ENCODE measurements at regions of chr18 and their contacts with region 1.

Region 1: GRCh38 chr18:25230658-25231326 is 121.2 kb downstream of the ZNF521 start:
- DNase-seq: peak; percentile 80
- H3K4me3 ChIP-seq: peak overlapping the region; percentile 35
- H3K27ac ChIP-seq: peak overlapping the region; percentile 81
- H3K27me3 ChIP-seq: no peaks in the 10 kb centered on the region
- CTCF ChIP-seq: no peak

Region 2: DNA sequence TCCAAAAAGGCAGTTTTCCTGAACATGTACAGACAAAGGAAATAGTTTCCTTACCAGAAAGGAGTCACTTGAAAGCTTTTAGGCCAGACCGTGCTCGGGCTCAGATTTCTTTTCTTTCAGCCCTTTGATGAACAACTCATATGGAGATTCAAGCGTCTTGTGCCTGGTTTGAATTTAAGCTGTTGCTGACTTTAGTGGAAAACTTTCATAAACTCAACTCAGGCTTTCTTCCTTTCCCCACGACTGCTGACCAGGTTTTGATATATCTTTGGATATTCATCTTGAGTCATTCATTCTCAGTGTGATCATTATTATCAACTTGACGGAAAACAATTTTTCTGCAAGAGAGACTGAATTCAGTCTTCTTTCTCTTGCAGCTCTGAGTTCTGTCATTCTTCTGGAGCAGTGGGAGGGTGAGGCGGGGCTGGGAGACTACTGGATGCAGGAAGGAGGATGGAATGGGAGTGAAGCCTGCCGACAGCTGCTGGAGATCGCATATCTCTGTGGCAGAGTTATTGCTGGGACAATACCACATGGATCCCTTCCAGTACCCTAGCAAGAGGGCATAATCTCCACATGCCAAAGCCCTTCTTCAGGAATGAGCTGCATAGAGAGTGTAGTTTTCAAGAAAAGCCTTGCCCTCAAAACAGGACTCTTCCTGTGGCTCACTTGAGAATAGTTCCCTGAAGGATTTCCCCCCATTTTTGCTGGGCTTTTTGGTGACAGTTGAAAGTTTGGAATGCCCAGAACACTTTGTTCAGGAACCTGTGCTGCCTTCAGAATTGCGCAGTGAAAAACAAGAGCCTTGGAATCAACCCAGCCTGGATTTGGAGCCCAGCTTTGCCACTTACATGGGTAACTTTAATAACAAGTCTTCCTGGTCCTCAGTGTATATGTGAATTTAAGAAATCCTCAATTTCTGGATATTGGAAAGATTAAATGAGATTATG is 243.2 kb before region 1 on chr18:
- CTCF ChIA-PET with region 1: no interaction called
- POLR2A ChIA-PET with region 1: interaction called, 13 read pairs
- DNase-seq: no peak
- H3K4me3 ChIP-seq: no peak overlapping the region
- H3K27ac ChIP-seq: no peak overlapping the region
- H3K27me3 ChIP-seq: no peaks in the 10 kb centered on the region
- CTCF ChIP-seq: no peak

Region 3: DNA sequence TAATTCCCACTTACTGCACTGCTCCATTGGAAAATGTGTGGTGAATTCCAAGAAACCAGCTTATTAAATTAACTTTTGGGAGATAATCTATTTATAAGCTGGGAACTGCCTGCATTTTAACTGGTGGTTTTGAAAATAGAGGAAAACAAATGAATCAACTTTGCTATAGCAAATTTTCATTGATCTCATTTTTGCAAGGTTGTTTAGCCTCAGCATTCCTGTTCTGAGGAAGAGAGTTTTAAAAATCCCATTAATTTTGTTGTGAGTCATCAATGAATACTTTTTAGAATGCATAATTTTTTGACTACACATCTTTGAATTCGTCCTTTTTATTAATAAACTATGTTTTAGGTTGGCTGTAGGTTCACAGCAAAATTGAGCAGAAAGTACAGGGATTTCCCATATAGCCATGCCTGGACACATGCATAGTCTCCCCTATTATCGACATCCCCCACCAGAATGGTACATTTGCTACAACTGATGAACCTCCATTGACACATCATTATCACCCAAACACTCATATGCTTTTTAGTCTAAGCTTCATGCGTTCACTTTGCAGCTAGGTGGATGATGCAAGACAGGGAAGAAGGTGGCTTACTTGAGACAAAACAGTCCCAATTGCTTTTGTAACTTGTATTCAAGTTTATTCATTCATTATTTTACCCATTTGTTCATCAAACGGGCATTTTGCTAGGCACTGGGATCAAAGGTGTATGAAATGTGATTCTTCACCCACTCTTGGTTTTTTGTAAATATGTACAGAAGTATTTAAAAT is 14.3 kb after region 1 on chr18:
- CTCF ChIA-PET with region 1: interaction called, 10 read pairs
- POLR2A ChIA-PET with region 1: no interaction called
- DNase-seq: no peak
- H3K4me3 ChIP-seq: no peak overlapping the region
- H3K27ac ChIP-seq: no peak overlapping the region
- H3K27me3 ChIP-seq: no peaks in the 10 kb centered on the region
- CTCF ChIP-seq: no peak

Region 4: DNA sequence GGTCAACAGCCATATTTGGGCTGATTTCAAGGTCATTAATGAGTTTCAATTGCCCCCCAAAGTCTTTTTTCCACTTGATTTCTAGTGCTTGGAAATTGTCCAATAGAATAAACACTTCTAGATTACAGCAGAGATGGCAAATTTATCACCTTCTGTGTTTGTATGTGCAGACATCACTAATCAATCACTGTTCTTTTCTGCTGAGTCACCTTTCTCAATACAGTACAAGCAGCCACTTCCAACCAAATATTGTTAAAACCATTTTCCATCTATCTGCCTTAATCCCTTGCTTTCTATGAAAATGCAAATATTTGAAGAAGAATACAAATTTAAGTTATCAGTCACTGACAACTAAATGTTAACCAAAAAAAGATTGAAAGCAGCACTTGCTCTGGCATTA is 161.4 kb after region 1 on chr18:
- CTCF ChIA-PET with region 1: no interaction called
- POLR2A ChIA-PET with region 1: no interaction called
- DNase-seq: no peak
- H3K4me3 ChIP-seq: no peak overlapping the region
- H3K27ac ChIP-seq: no peak overlapping the region
- H3K27me3 ChIP-seq: no peaks in the 10 kb centered on the region
- CTCF ChIP-seq: no peak

Region 5: DNA sequence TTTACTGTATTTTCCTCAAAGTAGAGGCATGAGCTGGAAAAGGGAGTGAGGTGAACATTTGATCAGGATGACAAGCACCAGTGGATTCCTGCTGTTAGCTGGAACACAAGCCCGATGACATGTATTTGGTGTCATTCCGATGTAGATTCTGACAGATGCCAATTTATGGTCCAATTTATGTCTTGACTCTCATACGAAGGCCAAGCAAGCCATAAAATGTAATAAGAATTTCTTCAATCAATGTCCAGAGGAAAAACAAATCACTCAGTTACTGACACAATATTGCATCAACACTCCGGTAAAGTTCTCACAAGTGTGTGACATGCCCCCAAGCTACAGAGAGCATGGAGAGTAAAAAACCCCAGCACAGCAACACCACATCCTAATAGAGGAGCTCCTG is 259.5 kb after region 1 on chr18:
- CTCF ChIA-PET with region 1: no interaction called
- POLR2A ChIA-PET with region 1: no interaction called
- DNase-seq: no peak
- H3K4me3 ChIP-seq: no peak overlapping the region
- H3K27ac ChIP-seq: no peak overlapping the region
- H3K27me3 ChIP-seq: peaks cover 4% of the 10 kb centered on the region
- CTCF ChIP-seq: no peak

Measured in AG04450 (cell line).